Heart left ventricle (tissue), 16 donors: ENCODE measurements at regions of chr9 and their contacts with region 1.

Region 1: GRCh38 chr9:89602978-89603766 is 1.6 kb upstream of the GADD45G start:
- DNase-seq: peak; percentile 88 to 92 (median 89)
- ATAC-seq: peak; percentile 16 to 53 (median 32)
- H3K4me3 ChIP-seq: peak overlapping the region in 11 of 12 donors; percentile 1 to 95 (median 86)
- H3K27ac ChIP-seq: peak overlapping the region in 9 of 12 donors; percentile 8 to 98 (median 95)
- H3K4me1 ChIP-seq: peaks cover 6 to 48% (median 33%) of the 10 kb centered on the region in 12 donors
- H3K27me3 ChIP-seq: peaks cover 0 to 3% (median 0%) of the 10 kb centered on the region in 9 donors
- CTCF ChIP-seq: peak; percentile 79 to 90 (median 85)
- POLR2A ChIP-seq: no peak

Region 2: DNA sequence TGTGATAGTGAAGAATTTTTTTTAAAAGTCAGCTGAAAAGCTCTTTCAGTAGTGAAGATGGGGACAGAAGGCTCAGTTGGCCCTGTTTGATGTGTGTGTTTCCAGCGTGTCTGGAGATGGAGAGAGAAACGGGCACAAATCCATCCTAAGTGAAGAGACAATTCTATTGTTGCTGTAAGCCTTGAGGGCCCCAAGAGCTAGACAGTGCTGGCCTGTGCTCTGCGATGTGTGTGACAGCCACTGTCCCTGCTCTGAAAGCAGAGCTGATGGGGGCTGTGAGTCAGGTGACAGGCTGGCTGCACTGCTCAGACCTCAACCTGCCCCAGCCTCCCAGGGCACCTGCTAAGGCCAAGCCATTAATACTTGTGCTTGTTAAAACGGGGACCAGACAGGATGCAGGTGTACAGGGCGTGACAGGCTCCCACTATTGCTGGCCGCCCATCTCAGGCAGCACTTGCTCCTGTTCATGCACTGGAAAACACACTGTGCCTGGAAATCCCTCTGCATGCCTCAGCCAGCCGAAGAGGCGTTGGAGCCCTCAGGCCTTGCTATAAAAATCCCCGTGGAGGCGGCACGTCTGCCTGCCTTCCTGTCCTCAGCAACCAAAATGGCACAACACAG is 60.7 kb before region 1 on chr9:
- intact Hi-C with region 1: no loop called
- DNase-seq: no peak
- ATAC-seq: no peak
- H3K4me3 ChIP-seq: no peak overlapping the region
- H3K27ac ChIP-seq: no peak overlapping the region
- H3K4me1 ChIP-seq: peaks cover 0 to 21% (median 0%) of the 10 kb centered on the region in 12 donors
- H3K27me3 ChIP-seq: no peaks in the 10 kb centered on the region
- CTCF ChIP-seq: no peak
- POLR2A ChIP-seq: no peak

Region 3: GRCh38 chr9:89642789-89643188 is 39.6 kb after region 1 on chr9:
- intact Hi-C with region 1: no loop called
- DNase-seq: no peak
- ATAC-seq: no peak
- H3K4me3 ChIP-seq: no peak overlapping the region
- H3K27ac ChIP-seq: no peak overlapping the region
- H3K4me1 ChIP-seq: peaks cover 0 to 30% (median 21%) of the 10 kb centered on the region in 12 donors
- H3K27me3 ChIP-seq: no peaks in the 10 kb centered on the region
- CTCF ChIP-seq: no peak
- POLR2A ChIP-seq: no peak

Region 4: DNA sequence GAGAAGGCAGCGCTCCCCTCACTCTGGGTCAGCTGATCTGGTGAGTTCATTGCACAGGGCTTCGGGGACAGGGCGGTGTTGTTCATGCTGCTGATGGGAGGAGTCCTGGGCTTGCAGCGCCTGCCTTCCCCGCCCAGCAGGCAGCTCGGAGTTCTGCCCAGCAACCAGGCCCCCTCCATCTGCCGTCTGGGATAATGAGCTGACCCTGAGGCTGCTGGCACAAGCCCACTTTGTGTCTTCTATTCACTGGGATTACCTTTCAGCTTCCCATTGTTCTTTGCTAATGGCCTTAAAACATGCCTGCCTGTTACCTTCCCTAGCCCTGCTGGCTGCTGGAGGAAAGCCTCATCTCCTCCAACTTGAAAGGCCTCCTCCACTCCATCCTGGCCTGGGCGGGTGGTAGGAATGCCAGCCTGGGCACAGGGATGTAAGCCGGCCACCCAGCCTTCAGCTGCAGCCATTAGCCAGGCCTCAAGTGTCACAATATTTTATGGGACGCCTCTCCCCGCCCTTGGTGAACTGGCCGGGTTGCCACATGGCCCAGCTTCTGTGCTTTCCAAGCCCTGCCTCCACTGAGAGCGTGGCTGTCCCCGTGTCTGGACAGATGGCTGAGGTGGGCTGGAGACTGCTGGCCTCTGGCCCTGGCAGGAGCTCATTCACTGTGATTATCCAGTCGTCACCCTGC is 72.0 kb after region 1 on chr9:
- intact Hi-C with region 1: loop called in 3 of 10 experiments (anchors 5 kb)
- DNase-seq: peak in 4 of 5 donors; percentile 54 to 86 (median 60)
- ATAC-seq: peak; percentile 76 to 91 (median 80)
- H3K4me3 ChIP-seq: no peak overlapping the region
- H3K27ac ChIP-seq: peak overlapping the region in 9 of 12 donors; percentile 20 to 72 (median 68)
- H3K4me1 ChIP-seq: peaks cover 0 to 35% (median 13%) of the 10 kb centered on the region in 12 donors
- H3K27me3 ChIP-seq: no peaks in the 10 kb centered on the region
- CTCF ChIP-seq: no peak
- POLR2A ChIP-seq: no peak

Region 5: DNA sequence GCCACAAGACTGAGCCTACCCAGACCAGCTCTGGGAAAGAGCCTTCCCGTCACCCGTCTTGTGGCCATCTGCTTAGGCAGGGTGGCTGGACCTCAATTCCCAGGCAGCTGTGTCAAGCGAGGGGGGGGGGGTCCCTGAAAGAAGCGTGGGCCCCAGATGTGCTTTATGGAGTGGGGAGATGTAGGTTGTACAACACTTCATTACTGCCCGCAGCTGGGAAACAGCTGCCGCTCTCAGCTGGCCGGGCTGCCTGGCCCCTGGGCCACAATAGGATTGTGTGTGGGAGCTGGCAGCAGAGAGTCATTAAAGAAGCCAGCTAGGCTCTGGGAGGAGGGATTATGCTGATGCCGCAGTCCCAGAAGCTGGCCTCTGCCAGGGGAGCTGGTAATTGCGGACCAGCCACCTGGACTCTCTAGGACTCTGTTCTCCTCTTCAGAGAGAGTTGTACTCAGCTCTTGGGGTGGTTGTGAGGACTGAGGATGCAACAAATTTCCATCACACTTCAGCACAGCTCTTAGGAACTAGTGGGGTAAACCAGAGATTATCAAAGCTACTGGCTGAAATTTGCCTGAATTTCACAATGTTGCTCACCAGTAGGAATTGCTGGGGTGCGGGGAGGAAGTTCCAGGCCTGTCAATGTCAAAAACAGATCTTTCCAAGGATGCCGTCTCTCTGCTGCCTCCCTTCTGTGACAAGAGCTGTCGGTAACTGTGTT is 147.1 kb after region 1 on chr9:
- intact Hi-C with region 1: loop called in 2 of 10 experiments (anchors 5 to 10 kb)
- DNase-seq: peak; percentile 58 to 78 (median 75)
- ATAC-seq: peak; percentile 5 to 78 (median 68)
- H3K4me3 ChIP-seq: no peak overlapping the region
- H3K27ac ChIP-seq: no peak overlapping the region
- H3K4me1 ChIP-seq: peaks cover 0 to 28% (median 5%) of the 10 kb centered on the region in 12 donors
- H3K27me3 ChIP-seq: no peaks in the 10 kb centered on the region
- CTCF ChIP-seq: no peak
- POLR2A ChIP-seq: no peak

Region 6: GRCh38 chr9:89808076-89808755 is 205.0 kb after region 1 on chr9:
- intact Hi-C with region 1: loop called in 4 of 10 experiments (anchors 10 kb)
- DNase-seq: no peak
- ATAC-seq: no peak
- H3K4me3 ChIP-seq: no peak overlapping the region
- H3K27ac ChIP-seq: peak overlapping the region in 1 of 12 donors; percentile 17
- H3K4me1 ChIP-seq: peaks cover 0 to 30% (median 4%) of the 10 kb centered on the region in 12 donors
- H3K27me3 ChIP-seq: peaks cover 0 to 7% (median 0%) of the 10 kb centered on the region in 9 donors
- CTCF ChIP-seq: peak in 3 of 12 donors; percentile 6 to 29 (median 11)
- POLR2A ChIP-seq: no peak

Region 7: DNA sequence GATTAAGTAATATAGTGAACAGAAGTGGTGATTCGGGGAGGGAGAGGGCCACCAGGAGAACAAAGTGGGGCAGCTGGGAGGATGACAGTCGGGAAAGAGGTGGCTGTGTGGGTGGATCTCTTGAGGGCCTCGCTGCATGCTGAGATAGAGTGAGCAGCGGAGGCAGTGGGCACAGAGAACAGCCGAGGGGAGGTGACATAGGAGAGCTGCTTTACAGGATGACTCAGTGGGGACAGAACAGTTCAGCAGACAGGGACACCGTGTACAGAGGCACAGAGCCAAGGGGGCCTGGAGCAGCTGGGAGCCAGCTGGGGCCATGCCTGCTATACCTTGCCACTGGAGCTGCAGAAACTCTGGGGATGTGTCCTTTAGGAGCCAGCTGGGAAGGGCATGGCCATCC is 275.5 kb after region 1 on chr9:
- intact Hi-C with region 1: loop called in 7 of 10 experiments (anchors 1 to 10 kb)
- DNase-seq: peak; percentile 75 to 95 (median 84)
- ATAC-seq: peak; percentile 89 to 91 (median 90)
- H3K4me3 ChIP-seq: no peak overlapping the region
- H3K27ac ChIP-seq: peak overlapping the region; percentile 53 to 95 (median 80)
- H3K4me1 ChIP-seq: peaks cover 0 to 62% (median 38%) of the 10 kb centered on the region in 12 donors
- H3K27me3 ChIP-seq: no peaks in the 10 kb centered on the region
- CTCF ChIP-seq: no peak
- POLR2A ChIP-seq: no peak

Region 8: GRCh38 chr9:89999534-90000370 is 396.6 kb after region 1 on chr9:
- intact Hi-C with region 1: loop called in 9 of 10 experiments (anchors 1 to 10 kb)
- DNase-seq: peak; percentile 78 to 91 (median 81)
- ATAC-seq: peak; percentile 90 to 95 (median 92)
- H3K4me3 ChIP-seq: peak overlapping the region in 9 of 12 donors; percentile 0 to 44 (median 29)
- H3K27ac ChIP-seq: peak overlapping the region; percentile 67 to 91 (median 84)
- H3K4me1 ChIP-seq: peaks cover 10 to 58% (median 46%) of the 10 kb centered on the region in 12 donors
- H3K27me3 ChIP-seq: no peaks in the 10 kb centered on the region
- CTCF ChIP-seq: peak in 3 of 12 donors; percentile 17 to 39 (median 19)
- POLR2A ChIP-seq: no peak